Dendritic cell treated with granulocyte-macrophage colony-stimulating factor and Interleukin-4, amounts not matched to agents 40 ng/mL and 50 ng/mL, for 4 days (primary cell): ENCODE measurements at regions of chr15 and their contacts with region 1.

Region 1: DNA sequence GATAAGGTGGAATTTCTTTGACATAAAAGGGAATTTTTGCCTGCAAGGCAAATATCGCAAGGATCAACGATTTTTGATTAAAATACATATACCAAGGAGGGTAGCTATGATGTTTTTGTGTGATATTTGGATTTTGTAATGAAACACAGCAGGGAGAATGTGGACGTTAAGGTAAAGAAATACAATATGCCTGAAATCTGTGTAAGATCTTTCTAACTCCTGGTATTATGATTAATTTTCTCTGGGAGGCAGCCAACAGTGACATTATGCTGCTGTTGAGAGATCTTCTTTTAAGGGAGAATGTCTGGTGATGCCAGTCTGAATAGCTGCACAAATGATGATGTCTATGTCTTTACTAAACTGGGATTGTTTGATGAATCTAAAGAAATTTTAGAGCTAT is 972.2 kb downstream of the SQOR start:
- H3K4me3 Mint-ChIP-seq: no peak overlapping the region
- H3K27ac Mint-ChIP-seq: no peak overlapping the region
- H3K4me1 Mint-ChIP-seq: no peaks in the 10 kb centered on the region
- H3K27me3 Mint-ChIP-seq: no peaks in the 10 kb centered on the region

Region 2: DNA sequence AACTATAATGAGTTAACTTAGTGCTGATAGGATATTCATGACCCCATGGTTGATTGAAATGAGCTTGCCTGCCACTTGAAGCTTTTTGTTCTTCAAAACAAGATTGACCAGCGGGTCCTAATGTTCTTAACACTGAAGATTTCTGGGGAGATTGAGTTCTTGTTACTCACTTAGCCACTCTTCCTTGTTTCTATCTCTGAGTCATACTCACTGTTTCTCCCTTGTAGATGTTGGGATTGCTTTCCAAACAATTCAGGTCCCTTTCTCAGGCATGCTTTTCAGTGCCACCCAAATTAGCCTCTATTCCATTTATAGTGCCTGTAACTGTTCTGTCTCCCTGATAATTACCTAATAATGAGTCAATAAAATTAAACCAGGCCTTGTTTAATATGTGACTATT is 455.3 kb before region 1 on chr15:
- intact Hi-C with region 1: no loop called
- H3K4me3 Mint-ChIP-seq: no peak overlapping the region
- H3K27ac Mint-ChIP-seq: no peak overlapping the region
- H3K4me1 Mint-ChIP-seq: no peaks in the 10 kb centered on the region
- H3K27me3 Mint-ChIP-seq: no peaks in the 10 kb centered on the region

Region 3: GRCh38 chr15:46467041-46467440 is 140.0 kb before region 1 on chr15:
- intact Hi-C with region 1: no loop called
- H3K4me3 Mint-ChIP-seq: no peak overlapping the region
- H3K27ac Mint-ChIP-seq: no peak overlapping the region
- H3K4me1 Mint-ChIP-seq: no peaks in the 10 kb centered on the region
- H3K27me3 Mint-ChIP-seq: no peaks in the 10 kb centered on the region

Region 4: DNA sequence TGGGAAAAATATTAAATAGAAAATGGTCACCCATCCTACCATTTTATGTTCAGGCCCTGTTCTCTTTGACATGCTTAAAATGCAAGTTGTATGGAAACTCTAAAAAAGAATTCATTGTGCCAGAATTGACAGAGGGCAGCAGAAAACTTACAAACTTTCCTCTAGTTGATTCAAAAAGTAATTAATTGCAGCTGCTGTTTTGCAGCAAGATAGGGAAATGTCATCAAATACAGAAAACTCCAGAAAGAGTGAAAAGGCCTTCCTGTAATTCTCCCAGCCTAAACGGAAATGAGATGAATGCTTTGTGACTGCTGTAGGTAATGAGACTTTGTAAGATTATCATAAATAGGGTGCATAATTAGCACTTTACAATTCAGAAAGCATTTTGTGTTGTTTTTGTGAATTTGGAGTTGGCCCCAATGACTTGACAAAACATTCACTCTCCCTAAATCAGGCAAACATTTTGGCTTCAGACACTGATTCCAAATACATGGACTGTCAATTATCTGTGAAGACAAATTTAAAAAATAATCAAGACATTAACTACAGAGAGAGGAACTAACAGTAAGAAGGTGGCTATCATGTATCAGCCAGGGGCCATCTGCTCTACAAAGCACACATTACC is 110.5 kb before region 1 on chr15:
- intact Hi-C with region 1: no loop called
- H3K4me3 Mint-ChIP-seq: no peak overlapping the region
- H3K27ac Mint-ChIP-seq: no peak overlapping the region
- H3K4me1 Mint-ChIP-seq: no peaks in the 10 kb centered on the region
- H3K27me3 Mint-ChIP-seq: no peaks in the 10 kb centered on the region

Region 5: GRCh38 chr15:46543626-46544025 is 63.5 kb before region 1 on chr15:
- intact Hi-C with region 1: no loop called
- H3K4me3 Mint-ChIP-seq: no peak overlapping the region
- H3K27ac Mint-ChIP-seq: no peak overlapping the region
- H3K4me1 Mint-ChIP-seq: no peaks in the 10 kb centered on the region
- H3K27me3 Mint-ChIP-seq: no peaks in the 10 kb centered on the region

Region 6: GRCh38 chr15:46660096-46660842 is 53.2 kb after region 1 on chr15:
- intact Hi-C with region 1: loop called (anchors 10 kb)
- H3K4me3 Mint-ChIP-seq: no peak overlapping the region
- H3K27ac Mint-ChIP-seq: no peak overlapping the region
- H3K4me1 Mint-ChIP-seq: no peaks in the 10 kb centered on the region
- H3K27me3 Mint-ChIP-seq: no peaks in the 10 kb centered on the region